ENCODE measurements at regions of chr3 and their contacts with region 1.

Region 1: GRCh38 chr3:17841190-17841828 is 98.9 kb upstream of the TBC1D5 start:
- DNase-seq: peak; percentile 92
- H3K4me3 Mint-ChIP-seq: no peak overlapping the region
- H3K27ac Mint-ChIP-seq: no peak overlapping the region
- H3K4me1 Mint-ChIP-seq: no peaks in the 10 kb centered on the region
- H3K27me3 Mint-ChIP-seq: peaks cover 11% of the 10 kb centered on the region

Region 2: DNA sequence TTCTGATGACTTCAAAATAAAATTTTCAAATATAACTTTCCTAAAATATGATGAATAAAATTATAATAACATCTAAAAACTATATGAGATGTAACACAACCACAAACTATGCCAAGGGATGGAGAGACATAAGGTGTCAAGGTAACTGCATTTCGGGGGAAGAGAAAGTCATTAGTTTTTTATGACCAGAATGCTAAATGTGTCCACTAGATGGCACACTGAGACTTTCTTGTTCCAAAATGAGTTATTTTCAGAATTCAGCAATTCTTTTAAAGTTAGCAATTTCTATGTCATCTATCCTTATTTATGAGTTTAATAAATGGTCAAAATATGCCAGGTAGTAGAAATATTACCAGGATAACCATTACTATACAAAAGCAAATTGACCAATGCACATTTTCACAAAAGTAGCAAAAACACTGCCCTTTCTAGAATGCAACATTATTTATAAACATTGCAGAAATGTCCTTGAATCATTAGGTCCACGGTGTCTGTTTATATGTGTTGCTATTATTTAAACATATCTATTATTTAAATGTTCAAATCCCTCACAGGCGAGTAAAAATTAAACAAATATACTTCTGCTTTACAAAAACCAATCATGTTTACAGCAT is 582.4 kb before region 1 on chr3:
- intact Hi-C with region 1: loop called (anchors 2 kb)
- DNase-seq: peak; percentile 75
- H3K4me3 Mint-ChIP-seq: no peak overlapping the region
- H3K27ac Mint-ChIP-seq: no peak overlapping the region
- H3K4me1 Mint-ChIP-seq: peaks cover 4% of the 10 kb centered on the region
- H3K27me3 Mint-ChIP-seq: peaks cover 4% of the 10 kb centered on the region

Region 3: GRCh38 chr3:17431004-17431403 is 410.3 kb before region 1 on chr3:
- intact Hi-C with region 1: loop called (anchors 1 kb)
- DNase-seq: no peak
- H3K4me3 Mint-ChIP-seq: no peak overlapping the region
- H3K27ac Mint-ChIP-seq: no peak overlapping the region
- H3K4me1 Mint-ChIP-seq: no peaks in the 10 kb centered on the region
- H3K27me3 Mint-ChIP-seq: no peaks in the 10 kb centered on the region

Region 4: DNA sequence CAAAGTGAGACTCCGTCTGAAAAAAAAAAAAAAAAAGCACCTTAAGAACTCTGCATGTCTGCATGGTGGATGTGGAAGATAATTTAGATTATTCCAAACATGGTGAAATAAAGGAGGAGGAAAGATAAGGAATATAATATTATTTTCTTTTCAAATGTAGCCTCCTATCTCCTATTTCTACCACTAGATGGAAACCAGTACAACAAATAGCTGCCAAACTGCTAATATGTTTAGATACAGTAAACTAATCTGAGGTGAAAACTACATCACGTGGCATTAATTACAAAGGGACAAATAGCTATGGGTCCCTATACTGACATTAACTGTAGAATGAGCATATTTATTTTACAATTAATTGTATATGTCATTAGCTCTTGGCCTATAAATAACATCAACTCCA is 296.7 kb before region 1 on chr3:
- intact Hi-C with region 1: loop called (anchors 10 kb)
- DNase-seq: no peak
- H3K4me3 Mint-ChIP-seq: no peak overlapping the region
- H3K27ac Mint-ChIP-seq: no peak overlapping the region
- H3K4me1 Mint-ChIP-seq: no peaks in the 10 kb centered on the region
- H3K27me3 Mint-ChIP-seq: no peaks in the 10 kb centered on the region

Region 5: DNA sequence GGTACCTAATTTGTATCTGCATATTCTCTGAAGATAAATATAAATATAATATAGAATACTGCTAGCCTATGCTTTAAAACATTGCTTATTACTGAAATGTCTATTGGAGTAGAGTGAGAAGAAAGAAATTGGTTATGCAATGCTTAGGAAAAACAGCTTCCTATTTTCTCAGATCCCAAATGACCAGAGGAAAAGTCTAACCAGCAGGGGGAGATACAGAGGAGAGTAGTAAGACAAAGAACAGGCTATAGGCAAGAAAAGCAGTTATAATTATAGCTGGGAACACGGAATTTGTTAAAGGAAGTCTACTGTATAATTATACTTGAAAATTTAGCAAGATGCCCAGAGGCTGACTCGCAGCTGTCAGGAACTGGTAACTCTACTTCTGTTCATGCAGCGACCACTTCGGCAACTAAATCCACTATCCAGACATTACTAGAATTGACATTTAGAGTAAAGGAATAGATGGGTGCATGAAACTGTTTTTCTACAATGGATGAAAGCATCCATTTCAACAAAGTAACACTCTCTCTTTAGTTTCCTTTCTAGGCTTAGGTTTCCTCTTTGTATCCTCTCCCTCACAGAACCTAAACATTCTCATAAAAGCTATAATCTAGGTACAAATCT is 196.1 kb before region 1 on chr3:
- intact Hi-C with region 1: loop called (anchors 1 kb)
- DNase-seq: peak; percentile 65
- H3K4me3 Mint-ChIP-seq: no peak overlapping the region
- H3K27ac Mint-ChIP-seq: no peak overlapping the region
- H3K4me1 Mint-ChIP-seq: peaks cover 4% of the 10 kb centered on the region
- H3K27me3 Mint-ChIP-seq: no peaks in the 10 kb centered on the region

Region 6: GRCh38 chr3:17830788-17831187 is 10.5 kb before region 1 on chr3:
- intact Hi-C with region 1: no loop called
- DNase-seq: no peak
- H3K4me3 Mint-ChIP-seq: no peak overlapping the region
- H3K27ac Mint-ChIP-seq: no peak overlapping the region
- H3K4me1 Mint-ChIP-seq: no peaks in the 10 kb centered on the region
- H3K27me3 Mint-ChIP-seq: peaks cover 25% of the 10 kb centered on the region

Region 7: DNA sequence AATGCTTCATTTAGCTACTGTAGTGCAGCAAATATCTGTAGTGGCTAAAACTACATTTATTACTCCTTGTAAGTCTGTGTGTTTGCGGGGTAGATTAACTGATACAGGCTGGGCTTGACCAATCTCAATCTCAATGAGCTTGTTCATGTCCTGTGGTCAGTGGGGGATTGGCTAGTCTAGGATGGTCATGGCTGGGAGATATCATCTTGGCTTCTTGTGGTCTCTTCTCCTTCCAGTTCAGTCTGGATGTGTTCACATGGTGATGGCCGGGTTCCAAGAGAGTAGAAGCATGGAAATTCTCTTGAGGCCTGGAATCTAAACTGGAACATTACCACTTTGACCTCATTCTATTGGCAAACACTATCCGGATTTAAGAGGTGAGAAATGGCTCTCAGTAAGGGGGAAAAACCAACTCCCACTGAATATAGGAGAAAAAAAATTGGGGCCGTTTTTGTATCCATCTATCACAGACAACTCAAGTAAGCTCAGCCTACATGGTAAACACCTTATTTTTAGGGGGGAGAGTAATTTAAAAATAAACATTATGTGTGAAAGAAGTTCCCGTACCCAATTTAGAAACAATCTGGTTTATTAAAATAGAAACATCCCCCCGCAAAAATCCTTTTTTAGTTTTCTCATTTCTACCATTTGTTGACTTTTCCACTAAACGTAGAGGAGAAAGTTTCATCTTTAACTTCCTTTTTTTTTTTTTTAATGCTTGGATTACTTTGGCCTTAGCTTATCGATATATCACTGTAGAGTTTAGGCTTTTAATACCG is 186.0 kb after region 1 on chr3:
- intact Hi-C with region 1: no loop called
- DNase-seq: no peak
- H3K4me3 Mint-ChIP-seq: no peak overlapping the region
- H3K27ac Mint-ChIP-seq: no peak overlapping the region
- H3K4me1 Mint-ChIP-seq: no peaks in the 10 kb centered on the region
- H3K27me3 Mint-ChIP-seq: peaks cover 2% of the 10 kb centered on the region